ENCODE measurements at regions of chr3 and their contacts with region 1.

Region 1: GRCh38 chr3:14791343-14791945 is 27.3 kb upstream of the FGD5 start:
- DNase-seq: peak; percentile 61 to 77 (median 74)
- H3K4me3 ChIP-seq: no peak overlapping the region
- H3K27ac ChIP-seq: no peak overlapping the region
- H3K4me1 ChIP-seq: peaks cover 0 to 11% (median 3%) of the 10 kb centered on the region in 4 experiments
- H3K27me3 ChIP-seq: no peaks in the 10 kb centered on the region

Region 2: DNA sequence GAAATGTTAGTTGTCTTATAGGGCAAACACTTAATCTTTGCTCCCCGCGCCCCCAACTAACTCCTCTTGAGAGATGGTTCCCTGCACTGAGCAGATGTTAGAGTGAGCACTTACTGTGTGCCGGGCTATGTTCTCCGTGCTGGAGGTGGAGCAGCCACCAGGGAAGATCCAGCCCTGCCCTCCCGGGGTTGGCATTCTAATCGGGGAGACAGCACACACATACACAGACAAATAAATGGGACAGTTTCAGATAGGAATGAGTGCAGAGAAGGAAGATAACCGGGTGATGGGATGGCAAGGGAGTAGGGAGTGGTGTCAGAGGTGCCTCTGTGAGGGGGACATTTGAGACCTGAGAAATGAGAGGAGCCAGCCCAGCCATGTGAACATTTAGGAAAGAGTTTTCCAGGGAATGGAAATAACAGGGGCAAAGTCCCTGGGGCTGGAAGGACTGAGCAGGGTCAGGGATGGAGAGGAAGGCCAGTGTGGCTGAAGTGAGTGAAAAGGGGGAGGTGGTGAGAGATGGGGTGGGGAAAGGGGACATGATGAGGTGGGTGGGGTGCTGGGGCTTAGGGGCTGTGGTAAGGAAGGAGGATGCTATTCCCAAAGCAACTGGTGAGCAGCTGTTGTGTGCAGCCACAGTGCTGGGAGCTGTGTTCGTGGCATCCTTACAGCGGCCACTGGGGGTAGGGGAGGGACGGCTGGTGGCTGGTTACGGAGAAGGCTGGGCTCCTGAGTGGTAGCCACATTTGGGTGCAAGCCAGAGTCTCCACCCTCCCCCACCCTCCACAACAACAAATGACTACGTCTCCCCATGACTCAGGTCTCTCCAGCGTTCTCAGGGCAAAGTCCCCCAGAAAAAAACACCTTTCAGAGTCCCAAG is 11.9 kb after region 1 on chr3:
- CTCF ChIA-PET with region 1: interaction called, 26 read pairs
- POLR2A ChIA-PET with region 1: no interaction called
- DNase-seq: peak; percentile 71 to 92 (median 82)
- H3K4me3 ChIP-seq: peak overlapping the region in 1 of 7 experiments; percentile 3
- H3K27ac ChIP-seq: peak overlapping the region in 1 of 2 experiments; percentile 26
- H3K4me1 ChIP-seq: peaks cover 0 to 37% (median 34%) of the 10 kb centered on the region in 4 experiments
- H3K27me3 ChIP-seq: no peaks in the 10 kb centered on the region

Region 3: DNA sequence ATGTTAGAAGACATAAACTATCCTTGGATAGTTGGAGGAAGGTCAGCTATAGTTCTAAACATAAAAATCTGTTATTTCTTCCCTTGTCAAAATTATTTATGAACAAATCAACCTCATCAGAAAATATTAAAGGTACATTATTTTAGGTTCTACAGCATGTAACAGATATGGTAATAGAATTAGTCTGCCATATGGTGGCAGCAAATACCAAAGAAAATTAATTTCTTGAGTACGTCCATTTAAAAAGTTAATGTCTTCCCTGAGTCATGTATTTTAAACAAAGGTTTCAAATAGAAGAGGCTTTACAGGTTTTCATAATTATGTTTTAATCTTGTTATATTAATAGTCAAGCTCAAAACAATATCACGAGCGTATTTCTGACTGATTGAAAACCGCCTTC is 1024.3 kb after region 1 on chr3:
- CTCF ChIA-PET with region 1: no interaction called
- POLR2A ChIA-PET with region 1: no interaction called
- DNase-seq: peak; percentile 78 to 87 (median 87)
- H3K4me3 ChIP-seq: no peak overlapping the region
- H3K27ac ChIP-seq: no peak overlapping the region
- H3K4me1 ChIP-seq: peaks cover 2 to 13% (median 9%) of the 10 kb centered on the region in 4 experiments
- H3K27me3 ChIP-seq: no peaks in the 10 kb centered on the region